Activated CD4-positive, alpha-beta T cell treated with anti-CD3 and anti-CD28 coated beads for 36 hours (primary cell): ENCODE measurements at regions of chr6 and their contacts with region 1.

Region 1: GRCh38 chr6:34887753-34888513 is at the start of gene TAF11:
- DNase-seq: peak; percentile 96
- ATAC-seq: peak; percentile 89
- H3K4me3 Mint-ChIP-seq: peak within 1 kb of the TSS; percentile 100
- H3K27ac Mint-ChIP-seq: peak within 1 kb of the TSS; percentile 100
- H3K4me1 Mint-ChIP-seq: peaks cover 41% of the 10 kb centered on the region
- H3K27me3 Mint-ChIP-seq: no peaks in the 10 kb centered on the region
- total RNA-seq, gene TAF11: 28.7 to 32.3 TPM

Region 2: DNA sequence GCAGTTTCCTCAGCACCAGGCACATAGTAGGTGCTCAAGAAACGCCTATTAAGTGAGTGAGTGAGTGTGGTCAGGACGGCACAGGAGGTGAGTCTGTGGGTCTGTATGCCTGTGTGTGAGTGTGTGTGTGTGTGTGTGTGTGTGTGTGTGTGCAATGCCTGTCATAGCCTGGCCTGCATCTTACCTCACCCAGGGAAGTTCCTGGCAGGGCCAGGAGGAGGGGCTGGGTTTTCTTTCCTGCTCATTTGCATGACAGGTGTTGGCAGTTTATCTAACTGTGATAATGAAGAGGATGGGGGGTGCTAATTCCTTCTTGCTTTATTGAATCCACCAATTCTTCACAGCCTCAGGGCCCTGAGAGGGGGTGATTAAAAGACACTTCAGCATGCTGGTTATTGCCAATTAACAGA is 937.5 kb before region 1 on chr6:
- CTCF ChIA-PET with region 1: no interaction called
- POLR2A ChIA-PET with region 1: no interaction called
- intact Hi-C with region 1: no loop called
- DNase-seq: no peak
- ATAC-seq: no peak
- H3K4me3 Mint-ChIP-seq: no peak overlapping the region
- H3K27ac Mint-ChIP-seq: no peak overlapping the region
- H3K4me1 Mint-ChIP-seq: peaks cover 3% of the 10 kb centered on the region
- H3K27me3 Mint-ChIP-seq: peaks cover 2% of the 10 kb centered on the region

Region 3: DNA sequence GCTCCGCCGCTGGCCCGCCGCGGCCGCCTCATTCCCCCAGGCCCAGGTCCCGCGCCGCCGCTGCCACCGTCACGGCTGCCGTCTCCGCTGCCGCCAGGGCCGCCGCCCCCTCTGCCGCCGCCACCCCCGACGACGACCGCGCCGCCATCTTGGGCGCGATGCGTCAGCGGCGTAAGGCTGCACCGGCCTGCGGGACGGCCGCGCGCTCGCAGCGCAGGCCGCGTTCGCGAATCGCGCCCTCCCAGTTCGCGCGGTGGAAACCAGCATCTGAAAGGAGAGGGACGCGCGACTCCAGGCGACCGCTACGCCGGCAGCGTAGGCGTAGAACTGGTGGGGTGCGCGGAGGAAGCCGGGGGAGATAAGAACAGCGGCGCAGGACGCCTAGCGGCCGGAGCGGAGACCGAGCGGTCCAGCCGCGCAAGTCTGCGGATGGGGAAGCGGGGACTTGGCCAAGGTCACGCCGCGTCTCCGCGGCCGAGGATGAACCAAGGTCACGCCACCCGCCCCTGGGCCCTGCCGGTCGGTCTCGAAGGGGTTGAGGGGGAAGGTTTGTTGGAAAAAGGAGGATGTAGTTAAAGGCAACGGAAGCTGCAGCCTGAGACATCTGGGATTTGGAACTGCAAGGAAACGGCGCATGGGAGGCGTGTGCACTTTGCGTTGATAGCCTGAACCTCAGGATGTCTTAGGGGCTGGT is 495.3 kb before region 1 on chr6 and contains the start of gene NUDT3:
- CTCF ChIA-PET with region 1: no interaction called
- POLR2A ChIA-PET with region 1: no interaction called
- intact Hi-C with region 1: loop called in 1 of 2 experiments (anchors 2 kb)
- DNase-seq: peak; percentile 96
- ATAC-seq: peak; percentile 92
- H3K4me3 Mint-ChIP-seq: no peak within 1 kb of the TSS
- H3K27ac Mint-ChIP-seq: peak within 1 kb of the TSS; percentile 95
- H3K4me1 Mint-ChIP-seq: peaks cover 21% of the 10 kb centered on the region
- H3K27me3 Mint-ChIP-seq: no peaks in the 10 kb centered on the region
- total RNA-seq, gene NUDT3: 13.3 to 13.6 TPM

Region 4: GRCh38 chr6:34656378-34657036 is 231.4 kb before region 1 on chr6:
- CTCF ChIA-PET with region 1: no interaction called
- POLR2A ChIA-PET with region 1: no interaction called
- intact Hi-C with region 1: loop called in 1 of 2 experiments (anchors 10 kb)
- DNase-seq: peak; percentile 74
- ATAC-seq: peak; percentile 94
- H3K4me3 Mint-ChIP-seq: peak overlapping the region; percentile 58
- H3K27ac Mint-ChIP-seq: peak overlapping the region; percentile 90
- H3K4me1 Mint-ChIP-seq: peaks cover 55% of the 10 kb centered on the region
- H3K27me3 Mint-ChIP-seq: no peaks in the 10 kb centered on the region

Region 5: DNA sequence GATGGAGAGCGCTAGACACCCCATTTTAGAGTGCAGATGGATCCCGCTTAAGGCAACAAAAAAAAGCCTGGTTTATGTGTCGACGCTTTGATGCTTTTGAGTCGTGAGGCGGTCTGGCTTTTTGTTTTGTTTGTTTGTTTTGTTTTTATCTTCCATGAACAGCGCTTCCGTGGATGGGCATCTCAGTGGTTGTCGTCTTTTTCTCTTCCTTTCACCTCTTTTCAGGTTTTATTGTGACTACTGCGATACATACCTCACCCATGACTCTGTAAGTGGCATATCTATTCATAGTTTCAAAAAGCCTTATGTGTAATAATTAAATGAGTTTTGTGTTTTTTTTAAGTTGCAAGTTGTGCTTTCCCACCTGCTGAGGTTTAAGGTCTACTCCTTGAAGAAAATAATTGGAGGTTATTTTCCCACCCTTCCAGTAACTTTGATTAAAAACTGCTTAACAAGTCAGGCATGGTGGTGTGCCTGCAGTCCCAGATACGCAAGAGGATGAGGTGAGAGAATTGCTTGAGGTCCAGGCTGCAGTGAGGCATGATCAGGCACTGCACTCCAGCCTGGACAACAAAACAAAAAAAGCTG is 130.2 kb before region 1 on chr6:
- CTCF ChIA-PET with region 1: interaction called, 3 read pairs
- POLR2A ChIA-PET with region 1: interaction called, 10 read pairs
- intact Hi-C with region 1: loop called (anchors 1 kb)
- DNase-seq: no peak
- ATAC-seq: no peak
- H3K4me3 Mint-ChIP-seq: no peak overlapping the region
- H3K27ac Mint-ChIP-seq: no peak overlapping the region
- H3K4me1 Mint-ChIP-seq: peaks cover 12% of the 10 kb centered on the region
- H3K27me3 Mint-ChIP-seq: no peaks in the 10 kb centered on the region

Region 6: GRCh38 chr6:35259194-35259947 is 371.4 kb after region 1 on chr6 and contains the start of gene ZNF76:
- CTCF ChIA-PET with region 1: no interaction called
- POLR2A ChIA-PET with region 1: interaction called, 6 read pairs
- intact Hi-C with region 1: loop called in 1 of 2 experiments (anchors 1 kb)
- DNase-seq: peak; percentile 95
- ATAC-seq: peak; percentile 89
- H3K4me3 Mint-ChIP-seq: peak within 1 kb of the TSS; percentile 91
- H3K27ac Mint-ChIP-seq: peak within 1 kb of the TSS; percentile 90
- H3K4me1 Mint-ChIP-seq: peaks cover 45% of the 10 kb centered on the region
- H3K27me3 Mint-ChIP-seq: no peaks in the 10 kb centered on the region
- total RNA-seq, gene ZNF76: 35.2 to 40.1 TPM

Region 7: GRCh38 chr6:35327349-35328027 is 439.6 kb after region 1 on chr6:
- CTCF ChIA-PET with region 1: no interaction called
- POLR2A ChIA-PET with region 1: no interaction called
- intact Hi-C with region 1: no loop called
- DNase-seq: peak; percentile 89
- ATAC-seq: peak; percentile 96
- H3K4me3 Mint-ChIP-seq: no peak overlapping the region
- H3K27ac Mint-ChIP-seq: peak overlapping the region; percentile 73
- H3K4me1 Mint-ChIP-seq: peaks cover 19% of the 10 kb centered on the region
- H3K27me3 Mint-ChIP-seq: no peaks in the 10 kb centered on the region

Region 8: DNA sequence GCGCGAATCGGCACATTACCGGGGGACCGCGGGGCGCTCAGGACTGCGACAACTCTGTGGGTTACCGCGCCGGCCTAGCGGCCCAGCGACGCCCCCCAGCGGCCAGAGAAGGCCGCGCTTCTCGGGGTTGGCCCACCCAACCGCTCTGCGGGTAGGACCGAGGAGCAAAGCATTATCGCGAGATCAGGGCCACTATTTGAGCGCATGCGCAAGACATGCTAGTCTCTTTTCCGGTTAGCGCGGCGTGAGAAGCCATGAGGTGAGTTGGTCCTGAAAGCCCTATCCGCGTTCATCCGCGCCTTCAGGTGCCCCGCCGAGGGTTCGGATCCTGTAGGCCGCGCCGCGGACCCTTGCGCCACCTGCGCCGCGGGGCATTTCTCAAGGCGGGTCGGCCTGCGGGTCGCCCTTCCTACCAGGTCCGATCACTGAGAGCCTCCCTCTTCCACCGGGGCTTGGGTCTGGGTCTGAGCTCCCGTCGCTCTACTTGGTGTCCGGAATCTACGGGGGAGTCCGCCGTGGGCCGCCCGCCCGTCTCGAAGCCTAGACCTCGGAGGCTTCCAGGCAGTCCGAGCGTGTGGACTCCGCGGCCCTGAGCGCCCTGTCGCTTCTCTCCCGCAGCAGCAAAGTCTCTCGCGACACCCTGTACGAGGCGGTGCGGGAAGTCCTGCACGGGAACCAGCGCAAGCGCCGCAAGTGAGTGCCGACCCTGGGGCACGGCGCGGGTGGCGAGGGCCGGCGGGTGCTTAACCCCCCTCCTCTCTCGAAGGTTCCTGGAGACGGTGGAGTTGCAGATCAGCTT is 580.4 kb after region 1 on chr6 and contains the start of gene RPL10A:
- CTCF ChIA-PET with region 1: no interaction called
- POLR2A ChIA-PET with region 1: no interaction called
- intact Hi-C with region 1: loop called in 1 of 2 experiments (anchors 2 kb)
- DNase-seq: peak; percentile 97
- ATAC-seq: peak; percentile 87
- H3K4me3 Mint-ChIP-seq: peak within 1 kb of the TSS; percentile 93
- H3K27ac Mint-ChIP-seq: peak within 1 kb of the TSS; percentile 98
- H3K4me1 Mint-ChIP-seq: peaks cover 43% of the 10 kb centered on the region
- H3K27me3 Mint-ChIP-seq: no peaks in the 10 kb centered on the region
- total RNA-seq, gene RPL10A: 1,952 to 2,334 TPM